ENCODE measurements at regions of chr9 and their contacts with region 1.

Region 1: DNA sequence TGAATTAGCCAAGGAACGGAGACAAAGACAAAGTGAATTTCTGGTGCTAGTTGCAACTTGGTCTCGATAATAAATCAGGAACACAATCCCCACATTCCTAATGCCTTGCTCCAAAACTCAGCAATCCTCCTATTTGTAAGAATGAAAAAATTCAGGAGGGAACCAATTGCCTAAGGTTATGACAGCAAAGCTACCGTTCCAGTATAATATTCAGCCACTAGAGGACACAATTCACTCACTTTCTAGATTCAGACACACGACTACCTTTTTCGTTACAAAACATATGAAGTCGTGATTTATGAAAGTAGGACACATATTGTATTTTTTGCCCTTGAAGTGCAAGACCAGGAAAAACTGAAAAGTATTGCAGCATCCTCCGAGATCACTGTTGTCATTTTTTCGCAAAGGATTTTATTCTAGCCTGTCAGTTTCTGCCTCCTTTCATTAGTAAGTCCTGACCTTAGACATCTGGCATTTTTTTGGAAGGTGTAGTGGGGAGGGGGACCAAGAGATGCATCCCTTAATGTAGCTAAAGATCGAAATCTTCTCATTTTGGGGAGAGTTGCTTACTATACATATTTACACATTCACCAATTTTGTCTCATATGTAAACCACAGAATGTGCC is 133.1 kb downstream of the DOCK8 start:
- DNase-seq: no peak
- ATAC-seq: peak; percentile 55 to 57

Region 2: DNA sequence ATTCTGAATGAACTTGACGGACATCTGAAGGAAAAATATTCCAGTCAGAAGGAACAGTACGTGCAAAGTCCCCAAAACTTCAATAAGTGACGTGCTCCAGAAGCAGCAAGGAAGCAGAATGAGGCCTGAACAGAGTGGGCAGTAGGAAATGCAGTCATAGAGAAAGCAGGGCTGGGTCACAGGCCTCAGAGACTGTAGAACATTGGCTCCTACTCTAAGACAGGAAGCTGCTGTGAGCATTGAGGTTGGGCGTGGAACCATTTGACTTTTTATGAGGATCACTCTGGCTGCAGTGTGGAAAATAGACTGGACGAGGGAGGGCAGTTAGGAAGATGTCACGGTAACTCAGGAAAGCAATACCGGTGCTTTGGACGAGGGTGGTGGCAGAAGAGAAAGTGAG is 69.1 kb before region 1 on chr9:
- intact Hi-C with region 1: no loop called
- DNase-seq: no peak
- ATAC-seq: peak; percentile 57 to 68

Region 3: DNA sequence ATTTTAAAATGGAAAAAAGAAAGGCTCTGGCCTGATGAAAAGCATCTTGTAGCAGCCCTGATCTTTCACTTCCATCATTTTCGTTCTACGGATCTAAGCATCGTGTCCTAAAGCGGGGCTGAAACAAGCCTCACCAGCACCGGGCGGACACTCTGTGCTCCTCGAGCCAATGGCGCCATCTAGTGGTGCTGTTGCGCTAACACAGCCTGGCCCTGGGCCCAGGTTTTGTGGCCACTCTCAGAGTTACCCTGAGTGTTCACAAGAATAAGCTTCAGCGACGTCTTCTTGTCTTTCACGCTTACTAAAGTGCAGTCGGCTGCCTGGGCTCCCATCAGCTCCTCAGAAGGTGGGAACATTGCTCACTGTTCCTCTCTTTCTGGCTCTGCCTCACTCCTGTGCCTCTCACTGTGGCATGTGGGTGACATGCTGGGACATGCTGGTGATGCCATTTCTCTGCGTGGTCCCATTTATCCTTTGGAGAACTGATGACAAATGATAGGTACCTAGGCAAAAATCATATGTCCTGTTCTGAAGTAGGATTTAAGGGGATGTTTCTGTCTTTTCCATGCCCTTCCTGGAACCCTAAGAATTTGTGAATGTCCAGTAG is 661.4 kb after region 1 on chr9:
- intact Hi-C with region 1: loop called (anchors 5 to 10 kb)
- DNase-seq: peak; percentile 77
- ATAC-seq: peak; percentile 96 to 97